IMR-90 (cell line): ENCODE measurements at regions of chr12 and their contacts with region 1.

Region 1: DNA sequence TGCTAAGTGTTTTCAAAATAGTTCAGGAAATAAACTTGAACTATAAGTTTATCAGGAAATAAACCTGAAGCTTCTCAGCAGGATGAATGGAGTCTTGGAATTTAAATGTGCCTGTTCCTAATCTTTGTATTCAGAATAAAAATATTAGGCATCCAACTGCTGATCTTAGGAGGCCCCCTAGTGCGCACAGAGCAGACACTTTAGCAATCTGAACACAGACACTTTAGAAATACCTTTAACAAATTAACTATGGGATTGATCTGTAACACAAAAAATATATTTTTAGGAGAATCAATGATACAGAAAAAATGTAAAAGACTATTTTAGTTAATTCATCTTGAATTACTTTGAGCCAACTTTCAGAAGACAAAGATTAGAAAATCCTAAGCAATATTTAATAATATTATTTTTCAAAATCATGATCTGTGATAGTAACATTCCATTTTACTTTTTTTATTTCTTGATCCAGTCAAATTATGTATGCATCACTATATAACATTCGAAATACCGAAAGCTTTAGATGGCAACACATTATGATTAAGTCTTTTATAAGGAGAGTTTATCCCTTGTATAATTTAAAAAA is 80.9 kb downstream of the SLC41A2 start:
- DNase-seq: peak; percentile 49
- ATAC-seq: peak; percentile 82
- H3K4me3 ChIP-seq: no peak overlapping the region
- H3K27ac ChIP-seq: no peak overlapping the region
- H3K4me1 ChIP-seq: no peaks in the 10 kb centered on the region
- H3K27me3 ChIP-seq: no peaks in the 10 kb centered on the region
- CTCF ChIP-seq: peak; percentile 90
- POLR2A ChIP-seq: no peak
- RAD21 ChIP-seq: peak; percentile 97

Region 2: DNA sequence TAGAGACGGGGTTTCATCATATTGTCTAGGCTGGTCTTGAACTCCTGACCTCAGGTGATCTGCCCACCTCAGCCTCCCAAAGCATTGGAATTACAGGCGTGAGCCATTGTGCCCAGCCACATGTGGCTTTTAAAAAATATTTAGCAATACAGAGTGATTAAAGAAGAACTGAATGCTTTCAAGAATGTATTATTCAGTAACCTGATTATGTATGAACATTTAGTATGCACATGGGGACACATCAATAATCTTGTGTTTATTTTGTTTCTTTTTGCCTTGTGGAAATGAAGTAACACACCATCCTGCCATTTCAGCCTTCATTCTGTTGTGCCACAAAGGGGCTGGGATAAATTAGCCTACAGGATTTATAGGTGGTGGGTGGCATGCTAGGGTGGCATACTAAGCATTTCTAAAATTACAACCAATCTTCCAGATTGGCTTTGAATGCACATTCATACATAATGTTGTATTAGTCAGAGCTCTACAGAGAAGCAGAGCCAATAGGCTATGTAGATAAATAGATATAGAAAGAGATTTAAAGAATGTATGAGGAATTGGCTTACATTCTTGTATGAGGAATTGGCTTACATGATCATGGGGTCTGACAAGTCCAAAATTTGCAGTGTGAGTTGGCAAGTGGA is 687.2 kb before region 1 on chr12:
- CTCF ChIA-PET with region 1: no interaction called
- POLR2A ChIA-PET with region 1: no interaction called
- dilution Hi-C with region 1: no loop called
- in situ Hi-C with region 1: loop called (anchors 10 kb)
- intact Hi-C with region 1: no loop called
- DNase-seq: peak; percentile 52
- ATAC-seq: peak; percentile 75
- H3K4me3 ChIP-seq: no peak overlapping the region
- H3K27ac ChIP-seq: peak overlapping the region; percentile 64; the same call in 1 of the 2 replicates
- H3K4me1 ChIP-seq: peaks cover 10% of the 10 kb centered on the region
- H3K27me3 ChIP-seq: no peaks in the 10 kb centered on the region
- CTCF ChIP-seq: no peak
- POLR2A ChIP-seq: no peak
- RAD21 ChIP-seq: no peak

Region 3: GRCh38 chr12:104456417-104456949 is 420.7 kb before region 1 on chr12 and contains the start of gene CHST11:
- CTCF ChIA-PET with region 1: no interaction called
- POLR2A ChIA-PET with region 1: no interaction called
- dilution Hi-C with region 1: no loop called
- in situ Hi-C with region 1: no loop called
- intact Hi-C with region 1: loop called (anchors 2 kb)
- DNase-seq: peak; percentile 79
- ATAC-seq: peak; percentile 95
- H3K4me3 ChIP-seq: peak within 1 kb of the TSS; percentile 69
- H3K27ac ChIP-seq: no peak within 1 kb of the TSS
- H3K4me1 ChIP-seq: peaks cover 2% of the 10 kb centered on the region; the same call in 1 of the 2 replicates
- H3K27me3 ChIP-seq: peaks cover 18% of the 10 kb centered on the region
- CTCF ChIP-seq: peak; percentile 18; the same call in 1 of the 2 replicates
- POLR2A ChIP-seq: peak; percentile 30; the same call in 1 of the 2 replicates
- RAD21 ChIP-seq: no peak
- total RNA-seq, gene CHST11: 1.4 TPM in 2 replicates

Region 4: DNA sequence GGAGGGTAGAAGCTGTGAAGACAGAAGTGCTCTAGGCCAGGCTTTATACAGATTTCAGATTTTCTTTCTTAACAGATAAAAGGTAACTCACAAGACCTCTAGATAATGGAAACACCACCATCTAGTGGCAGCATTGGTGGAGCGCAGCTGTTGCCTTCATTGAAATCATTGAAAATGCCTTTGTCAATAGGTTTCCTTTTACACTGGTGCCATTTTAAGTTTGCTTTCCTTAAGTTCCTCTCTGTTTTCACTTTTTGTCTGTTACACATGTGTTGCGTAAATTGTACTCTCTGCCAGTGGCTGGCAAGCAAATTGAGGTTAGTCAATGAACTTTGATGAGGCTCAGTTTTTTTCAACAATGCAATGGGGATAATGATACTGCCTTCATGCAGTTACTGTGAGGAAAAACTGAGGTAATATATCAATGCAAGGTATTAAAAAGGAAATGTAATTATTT is 175.9 kb after region 1 on chr12:
- CTCF ChIA-PET with region 1: no interaction called
- POLR2A ChIA-PET with region 1: no interaction called
- dilution Hi-C with region 1: no loop called
- in situ Hi-C with region 1: no loop called
- intact Hi-C with region 1: loop called (anchors 5 kb)
- DNase-seq: peak; percentile 79
- ATAC-seq: peak; percentile 95
- H3K4me3 ChIP-seq: no peak overlapping the region
- H3K27ac ChIP-seq: no peak overlapping the region
- H3K4me1 ChIP-seq: no peaks in the 10 kb centered on the region
- H3K27me3 ChIP-seq: no peaks in the 10 kb centered on the region
- CTCF ChIP-seq: peak; percentile 87
- POLR2A ChIP-seq: no peak
- RAD21 ChIP-seq: peak; percentile 81